GM12878 (cell line): ENCODE measurements at regions of chr21 and their contacts with region 1.

Region 1: GRCh38 chr21:34582506-34583150 is 32.3 kb downstream of the RCAN1 start:
- DNase-seq: no peak
- ATAC-seq: peak; percentile 95
- H3K4me3 ChIP-seq: no peak overlapping the region
- H3K27ac ChIP-seq: no peak overlapping the region
- H3K4me1 ChIP-seq: peaks cover 14% of the 10 kb centered on the region; the same call in 1 of the 2 replicates
- H3K27me3 ChIP-seq: no peaks in the 10 kb centered on the region
- CTCF ChIP-seq: peak; percentile 45 to 55 (median 48); a peak in 5 of 6 replicates
- EP300 ChIP-seq: no peak
- POLR2A ChIP-seq: no peak
- RAD21 ChIP-seq: peak; percentile 71

Region 2: GRCh38 chr21:34510148-34511142 is 72.2 kb before region 1 on chr21:
- CTCF ChIA-PET with region 1: interaction called, 55 read pairs
- POLR2A ChIA-PET with region 1: no interaction called
- RAD21 ChIA-PET with region 1: interaction called, 59 read pairs
- SMC1A ChIA-PET with region 1: interaction called, 19 read pairs
- in situ Hi-C with region 1: no loop called
- intact Hi-C with region 1: loop called (anchors 1 kb)
- DNase-seq: no peak
- ATAC-seq: peak; percentile 99
- H3K4me3 ChIP-seq: no peak overlapping the region
- H3K27ac ChIP-seq: no peak overlapping the region
- H3K4me1 ChIP-seq: no peaks in the 10 kb centered on the region
- H3K27me3 ChIP-seq: no peaks in the 10 kb centered on the region
- CTCF ChIP-seq: peak; percentile 81 to 86 (median 86)
- EP300 ChIP-seq: no peak
- POLR2A ChIP-seq: no peak
- RAD21 ChIP-seq: peak; percentile 98

Region 3: GRCh38 chr21:34517491-34518245 is 65.0 kb before region 1 on chr21:
- CTCF ChIA-PET with region 1: interaction called, 23 read pairs
- POLR2A ChIA-PET with region 1: no interaction called
- RAD21 ChIA-PET with region 1: interaction called, 10 read pairs
- SMC1A ChIA-PET with region 1: interaction called, 5 read pairs
- in situ Hi-C with region 1: no loop called
- intact Hi-C with region 1: no loop called
- DNase-seq: no peak
- ATAC-seq: peak; percentile 71
- H3K4me3 ChIP-seq: no peak overlapping the region
- H3K27ac ChIP-seq: no peak overlapping the region
- H3K4me1 ChIP-seq: peaks cover 5% of the 10 kb centered on the region; the same call in 1 of the 2 replicates
- H3K27me3 ChIP-seq: no peaks in the 10 kb centered on the region
- CTCF ChIP-seq: peak in 2 of 3 experiments; percentile 12 to 40; a peak in 2 of 6 replicates
- EP300 ChIP-seq: no peak
- POLR2A ChIP-seq: no peak
- RAD21 ChIP-seq: peak; percentile 56

Region 4: GRCh38 chr21:34526618-34527290 is 55.9 kb before region 1 on chr21:
- CTCF ChIA-PET with region 1: interaction called, 23 read pairs
- POLR2A ChIA-PET with region 1: no interaction called
- RAD21 ChIA-PET with region 1: interaction called, 7 read pairs
- SMC1A ChIA-PET with region 1: interaction called, 6 read pairs
- in situ Hi-C with region 1: no loop called
- intact Hi-C with region 1: loop called (anchors 5 kb)
- DNase-seq: no peak
- ATAC-seq: peak; percentile 89
- H3K4me3 ChIP-seq: peak overlapping the region; percentile 57
- H3K27ac ChIP-seq: peak overlapping the region; percentile 78
- H3K4me1 ChIP-seq: peaks cover 14% of the 10 kb centered on the region
- H3K27me3 ChIP-seq: no peaks in the 10 kb centered on the region
- CTCF ChIP-seq: no peak
- EP300 ChIP-seq: no peak
- POLR2A ChIP-seq: no peak
- RAD21 ChIP-seq: no peak

Region 5: GRCh38 chr21:34614633-34615486 is 32.2 kb after region 1 on chr21 and contains the start of gene RCAN1:
- CTCF ChIA-PET with region 1: interaction called, 5 read pairs
- POLR2A ChIA-PET with region 1: no interaction called
- RAD21 ChIA-PET with region 1: no interaction called
- SMC1A ChIA-PET with region 1: no interaction called
- in situ Hi-C with region 1: no loop called
- intact Hi-C with region 1: loop called (anchors 5 kb)
- DNase-seq: peak; percentile 75
- ATAC-seq: peak; percentile 98
- H3K4me3 ChIP-seq: peak within 1 kb of the TSS; percentile 81
- H3K27ac ChIP-seq: no peak within 1 kb of the TSS
- H3K4me1 ChIP-seq: peaks cover 6% of the 10 kb centered on the region
- H3K27me3 ChIP-seq: no peaks in the 10 kb centered on the region
- CTCF ChIP-seq: no peak
- EP300 ChIP-seq: no peak
- POLR2A ChIP-seq: 0 out of 2 replicates have a peak, but pooled peaks have one; percentile 1
- RAD21 ChIP-seq: no peak
- polyA plus RNA-seq, gene RCAN1: 5.1 to 8.8 TPM